ENCODE measurements at regions of chr17 and their contacts with region 1.

Region 1: GRCh38 chr17:74305865-74306654 is 20.0 kb upstream of the KIF19 start:
- DNase-seq: peak; percentile 44
- ATAC-seq: peak; percentile 31
- H3K4me3 ChIP-seq: no peak overlapping the region
- H3K27ac ChIP-seq: no peak overlapping the region
- H3K4me1 ChIP-seq: no peaks in the 10 kb centered on the region
- H3K27me3 ChIP-seq: peaks cover 5% of the 10 kb centered on the region; the same call in 1 of the 2 replicates
- CTCF ChIP-seq: peak; percentile 48

Region 2: GRCh38 chr17:73798111-73798748 is 507.8 kb before region 1 on chr17:
- CTCF ChIA-PET with region 1: no interaction called
- POLR2A ChIA-PET with region 1: no interaction called
- intact Hi-C with region 1: no loop called
- DNase-seq: peak; percentile 97
- ATAC-seq: peak; percentile 53
- H3K4me3 ChIP-seq: no peak overlapping the region
- H3K27ac ChIP-seq: peak overlapping the region; percentile 30
- H3K4me1 ChIP-seq: peaks cover 49% of the 10 kb centered on the region
- H3K27me3 ChIP-seq: no peaks in the 10 kb centered on the region
- CTCF ChIP-seq: no peak

Region 3: DNA sequence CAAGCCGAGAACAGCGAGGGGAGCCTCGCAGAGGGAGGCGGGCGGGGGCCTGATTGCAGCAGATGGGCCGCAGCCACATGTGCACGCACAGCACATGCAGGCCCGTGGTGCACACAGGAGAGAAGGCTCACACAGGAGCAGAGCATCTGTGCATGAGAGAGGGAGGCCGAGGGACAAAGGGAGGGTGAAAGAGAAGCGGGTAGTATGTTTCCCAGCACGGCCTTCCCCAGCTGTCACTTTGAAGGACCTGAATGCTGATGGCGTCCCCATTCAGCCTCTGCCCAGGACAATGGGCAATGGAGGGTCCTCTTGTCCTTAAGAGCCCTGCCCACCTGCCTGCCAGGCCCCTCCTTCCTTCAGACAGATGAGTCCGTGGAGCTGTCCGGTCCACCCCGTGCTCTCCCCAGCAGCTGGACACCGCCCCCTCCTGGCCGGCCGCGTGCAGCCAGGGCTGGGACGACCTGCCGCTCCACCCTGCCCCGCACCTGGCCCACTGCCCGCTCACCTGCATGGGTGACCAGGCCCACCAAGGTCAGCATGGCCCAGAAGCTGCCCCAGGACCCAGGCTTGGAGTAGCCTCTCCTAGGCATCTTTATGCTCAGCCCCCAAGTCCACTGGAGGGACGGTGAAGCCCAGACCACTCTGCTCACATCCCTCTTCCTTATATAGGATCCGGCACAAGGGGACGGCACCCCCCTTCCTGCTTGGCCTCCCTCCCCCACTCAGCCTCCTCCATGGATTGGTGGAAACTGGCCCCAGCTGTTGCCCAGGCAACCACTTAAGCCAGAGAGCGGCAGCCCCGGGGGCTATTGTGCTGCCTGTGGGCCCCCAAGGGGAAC is 55.4 kb after region 1 on chr17 and contains the start of gene BTBD17:
- CTCF ChIA-PET with region 1: interaction called, 7 read pairs
- POLR2A ChIA-PET with region 1: no interaction called
- intact Hi-C with region 1: loop called (anchors 1 kb)
- DNase-seq: peak; percentile 68
- ATAC-seq: peak; percentile 91
- H3K4me3 ChIP-seq: no peak within 1 kb of the TSS
- H3K27ac ChIP-seq: no peak within 1 kb of the TSS
- H3K4me1 ChIP-seq: no peaks in the 10 kb centered on the region
- H3K27me3 ChIP-seq: peaks cover 66% of the 10 kb centered on the region
- CTCF ChIP-seq: peak; percentile 94
- total RNA-seq, gene BTBD17: not detected in 2 replicates

Region 4: GRCh38 chr17:74499992-74500391 is 193.9 kb after region 1 on chr17:
- CTCF ChIA-PET with region 1: interaction called, 16 read pairs
- POLR2A ChIA-PET with region 1: no interaction called
- intact Hi-C with region 1: no loop called
- DNase-seq: no peak
- ATAC-seq: no peak
- H3K4me3 ChIP-seq: no peak overlapping the region
- H3K27ac ChIP-seq: no peak overlapping the region
- H3K4me1 ChIP-seq: no peaks in the 10 kb centered on the region
- H3K27me3 ChIP-seq: peaks cover 24% of the 10 kb centered on the region
- CTCF ChIP-seq: no peak

Measured in PC-3 (cell line).